ENCODE measurements at regions of chr4 and their contacts with region 1.

Region 1: GRCh38 chr4:151356510-151356909 is 31.1 kb upstream of the SH3D19 start:
- DNase-seq: no peak
- H3K4me3 ChIP-seq: no peak overlapping the region
- H3K27ac ChIP-seq: no peak overlapping the region
- H3K4me1 ChIP-seq: no peaks in the 10 kb centered on the region
- H3K27me3 ChIP-seq: no peaks in the 10 kb centered on the region
- CTCF ChIP-seq: no peak
- POLR2A ChIP-seq: no peak

Region 2: GRCh38 chr4:151251603-151252304 is 104.8 kb before region 1 on chr4:
- intact Hi-C with region 1: no loop called
- DNase-seq: peak; percentile 21 to 32
- H3K4me3 ChIP-seq: no peak overlapping the region
- H3K27ac ChIP-seq: peak overlapping the region in 2 of 3 donors; percentile 40 to 56
- H3K4me1 ChIP-seq: peaks cover 14 to 21% of the 10 kb centered on the region in 2 donors
- H3K27me3 ChIP-seq: no peaks in the 10 kb centered on the region
- CTCF ChIP-seq: no peak
- POLR2A ChIP-seq: no peak

Region 3: DNA sequence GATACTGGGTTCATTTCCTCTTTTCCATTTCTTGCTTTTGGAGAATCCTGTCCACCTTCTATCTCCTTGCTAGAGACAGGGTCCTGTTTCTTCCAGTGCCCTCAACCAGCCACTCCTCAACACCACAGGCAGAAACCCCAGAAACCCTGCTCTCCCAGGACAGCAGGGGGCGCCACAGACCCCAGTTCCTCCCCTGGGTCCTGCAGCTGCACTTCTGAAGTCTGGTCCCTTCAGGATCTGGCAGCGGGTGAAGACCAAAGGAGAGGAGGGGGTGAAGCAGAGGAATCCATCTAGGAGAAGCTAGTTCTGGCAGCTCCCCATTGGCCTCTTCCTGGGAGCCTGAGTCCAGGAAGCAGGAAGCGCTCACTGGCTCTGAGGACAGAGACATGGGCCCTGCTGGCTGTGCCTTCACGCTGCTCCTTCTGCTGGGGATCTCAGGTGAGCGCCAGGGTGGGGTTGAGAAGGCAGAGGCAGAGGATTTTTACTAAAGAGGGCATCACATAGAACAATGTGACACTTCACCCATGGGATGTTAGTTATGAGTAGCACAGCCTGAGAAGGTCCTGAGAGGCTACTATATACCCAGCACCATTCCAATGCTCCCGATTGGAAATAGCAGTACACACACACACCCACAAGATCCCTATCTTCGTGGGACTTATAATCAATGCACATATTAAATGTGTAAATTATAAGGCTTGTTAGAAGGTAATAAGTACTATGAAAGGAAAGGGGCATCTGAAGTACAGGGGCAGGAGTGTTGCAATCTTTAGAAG is 79.5 kb before region 1 on chr4 and contains the start of gene PRSS48:
- intact Hi-C with region 1: loop called (anchors 10 kb)
- DNase-seq: peak; percentile 63 to 72
- H3K4me3 ChIP-seq: no peak within 1 kb of the TSS
- H3K27ac ChIP-seq: no peak within 1 kb of the TSS
- H3K4me1 ChIP-seq: peaks cover 4 to 17% of the 10 kb centered on the region in 2 donors
- H3K27me3 ChIP-seq: no peaks in the 10 kb centered on the region
- CTCF ChIP-seq: peak; percentile 39 to 64 (median 55)
- POLR2A ChIP-seq: no peak
- total RNA-seq, gene PRSS48: not detected

Region 4: GRCh38 chr4:151418385-151418784 is 61.9 kb after region 1 on chr4:
- intact Hi-C with region 1: no loop called
- DNase-seq: peak; percentile 40 to 41
- H3K4me3 ChIP-seq: no peak overlapping the region
- H3K27ac ChIP-seq: peak overlapping the region; percentile 81 to 95 (median 91)
- H3K4me1 ChIP-seq: peaks cover 31 to 51% of the 10 kb centered on the region in 2 donors
- H3K27me3 ChIP-seq: no peaks in the 10 kb centered on the region
- CTCF ChIP-seq: no peak
- POLR2A ChIP-seq: no peak

Measured in thyroid gland (tissue), 4 donors.